Endothelial cell of umbilical vein (primary cell): ENCODE measurements at regions of chr2 and their contacts with region 1.

Region 1: GRCh38 chr2:68849579-68850030 is 21.6 kb downstream of the BMP10 start:
- DNase-seq: peak; percentile 84
- H3K4me3 ChIP-seq: no peak overlapping the region
- H3K27ac ChIP-seq: peak overlapping the region; percentile 88
- H3K4me1 ChIP-seq: peaks cover 24% of the 10 kb centered on the region
- H3K27me3 ChIP-seq: no peaks in the 10 kb centered on the region
- CTCF ChIP-seq: no peak
- POLR2A ChIP-seq: peak; percentile 45

Region 2: GRCh38 chr2:68837164-68837860 is 12.3 kb before region 1 on chr2:
- CTCF ChIA-PET with region 1: interaction called, 21 read pairs
- POLR2A ChIA-PET with region 1: no interaction called
- dilution Hi-C with region 1: no loop called
- intact Hi-C with region 1: loop called (anchors 1 kb)
- DNase-seq: peak; percentile 73
- H3K4me3 ChIP-seq: no peak overlapping the region
- H3K27ac ChIP-seq: no peak overlapping the region
- H3K4me1 ChIP-seq: peaks cover 10% of the 10 kb centered on the region
- H3K27me3 ChIP-seq: no peaks in the 10 kb centered on the region
- CTCF ChIP-seq: peak; percentile 60 to 69
- POLR2A ChIP-seq: no peak

Region 3: DNA sequence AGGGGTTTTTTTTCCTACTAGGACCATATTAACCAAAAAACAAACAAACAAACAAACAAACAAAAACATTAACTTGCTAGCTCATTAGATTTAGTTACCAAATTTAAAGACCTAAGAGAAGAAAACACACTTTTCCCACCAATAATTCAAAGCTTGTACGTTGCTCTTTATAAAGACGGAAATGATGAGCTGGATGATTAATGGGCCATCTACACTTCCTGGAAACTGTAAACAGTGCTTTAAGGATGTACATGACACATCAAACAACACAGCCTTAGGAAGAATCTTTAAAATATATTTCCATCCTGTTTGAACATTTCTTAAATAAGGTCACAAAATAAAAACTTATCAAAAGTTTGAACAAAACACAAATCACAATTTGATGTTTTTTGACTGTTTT is 20.6 kb after region 1 on chr2:
- CTCF ChIA-PET with region 1: interaction called, 3 read pairs
- POLR2A ChIA-PET with region 1: no interaction called
- dilution Hi-C with region 1: no loop called
- intact Hi-C with region 1: loop called (anchors 1 kb)
- DNase-seq: peak; percentile 70
- H3K4me3 ChIP-seq: no peak overlapping the region
- H3K27ac ChIP-seq: peak overlapping the region; percentile 39
- H3K4me1 ChIP-seq: peaks cover 8% of the 10 kb centered on the region
- H3K27me3 ChIP-seq: no peaks in the 10 kb centered on the region
- CTCF ChIP-seq: no peak
- POLR2A ChIP-seq: no peak

Region 4: GRCh38 chr2:68878753-68879152 is 29.1 kb after region 1 on chr2:
- CTCF ChIA-PET with region 1: interaction called, 5 read pairs
- POLR2A ChIA-PET with region 1: no interaction called
- dilution Hi-C with region 1: no loop called
- intact Hi-C with region 1: loop called (anchors 2 kb)
- DNase-seq: peak; percentile 49
- H3K4me3 ChIP-seq: no peak overlapping the region
- H3K27ac ChIP-seq: peak overlapping the region; percentile 78
- H3K4me1 ChIP-seq: peaks cover 33% of the 10 kb centered on the region
- H3K27me3 ChIP-seq: no peaks in the 10 kb centered on the region
- CTCF ChIP-seq: no peak
- POLR2A ChIP-seq: peak; percentile 5

Region 5: DNA sequence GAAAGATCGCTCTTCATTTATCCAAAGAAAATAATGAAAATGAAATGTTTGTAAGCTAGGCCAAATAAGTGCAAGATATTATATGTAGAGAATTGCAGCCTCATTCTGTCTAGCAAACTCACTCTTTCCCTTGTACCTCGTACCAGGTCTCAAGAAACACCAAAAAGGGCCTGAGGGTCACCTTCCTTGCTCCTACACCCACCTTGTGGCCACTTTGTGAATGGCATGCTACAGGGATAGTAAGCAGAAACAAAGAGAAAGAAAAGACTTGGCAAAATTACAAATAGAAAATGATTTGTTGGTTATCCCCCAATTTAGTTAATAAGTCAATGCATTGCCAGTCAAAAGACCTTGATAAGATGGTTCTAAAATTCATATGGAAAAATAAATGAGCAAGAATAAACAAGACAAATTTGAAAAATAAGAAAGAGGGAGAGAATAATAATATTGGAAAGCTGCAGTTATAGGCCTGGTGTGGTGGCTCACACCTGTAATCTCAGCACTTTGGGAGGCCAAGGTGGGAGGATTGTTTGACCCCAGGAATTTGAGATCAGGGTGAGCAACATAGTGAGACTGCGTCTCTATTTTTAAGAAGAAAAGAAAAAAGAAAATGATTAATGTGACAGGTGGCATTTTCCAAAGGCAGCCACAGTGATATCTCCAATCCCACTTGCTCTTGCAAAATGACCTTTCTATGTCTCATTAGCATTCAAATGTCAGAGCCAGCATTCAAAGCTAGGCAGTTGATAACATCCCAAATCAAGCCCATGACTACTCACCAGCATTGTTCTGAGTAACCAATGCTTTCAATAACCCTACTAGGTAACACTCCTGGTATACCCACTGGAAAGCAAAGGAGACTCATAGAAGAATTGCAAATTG is 60.4 kb after region 1 on chr2:
- CTCF ChIA-PET with region 1: interaction called, 9 read pairs
- POLR2A ChIA-PET with region 1: interaction called, 3 read pairs
- dilution Hi-C with region 1: no loop called
- intact Hi-C with region 1: loop called (anchors 1 kb)
- DNase-seq: peak; percentile 82
- H3K4me3 ChIP-seq: no peak overlapping the region
- H3K27ac ChIP-seq: no peak overlapping the region
- H3K4me1 ChIP-seq: peaks cover 32% of the 10 kb centered on the region
- H3K27me3 ChIP-seq: peaks cover 4 to 12% of the 10 kb centered on the region in 2 experiments
- CTCF ChIP-seq: peak; percentile 77 to 86
- POLR2A ChIP-seq: no peak